Naive thymus-derived CD4-positive, alpha-beta T cell (primary cell): ENCODE measurements at regions of chr5 and their contacts with region 1.

Region 1: DNA sequence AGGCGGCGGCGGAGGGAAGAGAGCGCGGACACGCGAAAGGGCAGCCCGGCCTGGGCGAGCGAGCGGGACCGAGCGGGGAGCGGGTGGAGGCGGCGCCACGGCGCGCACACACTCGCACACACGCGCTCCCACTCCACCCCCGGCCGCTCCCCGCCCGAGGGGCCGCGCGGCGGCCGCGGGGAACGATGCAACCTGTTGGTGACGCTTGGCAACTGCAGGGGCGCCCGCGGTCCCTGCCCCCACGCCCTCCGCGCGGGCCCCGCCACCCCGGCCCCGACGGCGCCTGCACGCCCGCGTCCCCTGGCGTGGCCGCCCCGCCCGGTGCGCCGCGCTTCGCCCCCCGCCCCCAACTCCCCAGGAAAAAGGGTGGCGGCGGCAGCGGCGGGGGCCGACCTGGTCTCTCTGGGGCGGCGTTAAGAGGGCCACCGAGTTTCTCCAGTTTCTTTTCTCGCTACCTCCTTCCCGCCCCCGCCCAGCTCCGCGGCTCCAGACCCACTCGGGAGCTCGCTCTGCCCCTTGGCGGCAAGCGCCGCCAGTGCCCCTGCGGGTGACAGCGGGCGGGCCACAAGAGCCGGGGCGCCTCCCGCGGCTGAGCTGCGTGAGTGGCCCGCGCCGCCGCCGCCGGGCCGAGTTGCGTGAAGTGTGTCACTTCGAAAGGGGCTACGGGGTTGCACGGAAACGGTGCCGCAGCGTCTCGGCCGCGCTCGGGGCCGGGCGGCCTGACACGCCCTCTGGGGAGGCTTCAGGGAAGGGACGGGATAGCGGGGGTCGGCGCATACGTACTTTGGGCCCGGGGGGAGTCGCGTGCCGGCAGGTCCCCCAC is at the start of gene NR3C1:
- DNase-seq: peak; percentile 83 to 92 (median 90)
- ATAC-seq: peak; percentile 85
- H3K4me3 ChIP-seq: peak within 1 kb of the TSS; percentile 98
- H3K4me3 Mint-ChIP-seq: peak within 1 kb of the TSS; percentile 93 to 99 (median 96)
- H3K27ac ChIP-seq: peak within 1 kb of the TSS; percentile 91
- H3K27ac Mint-ChIP-seq: peak within 1 kb of the TSS; percentile 98 to 100 (median 99)
- H3K4me1 ChIP-seq: peaks cover 17 to 29% of the 10 kb centered on the region in 2 donors
- H3K4me1 Mint-ChIP-seq: peaks cover 30 to 48% (median 40%) of the 10 kb centered on the region in 7 donors
- H3K27me3 ChIP-seq: no peaks in the 10 kb centered on the region
- H3K27me3 Mint-ChIP-seq: peaks cover 0 to 2% (median 0%) of the 10 kb centered on the region in 5 donors
- total RNA-seq, gene NR3C1: 68.0 to 140 (median 121) TPM

Region 2: GRCh38 chr5:142922223-142922952 is 481.4 kb before region 1 on chr5:
- CTCF ChIA-PET with region 1: interaction called, 3 read pairs
- POLR2A ChIA-PET with region 1: no interaction called
- intact Hi-C with region 1: loop called (anchors 1 to 2 kb)
- DNase-seq: peak in 1 of 9 donors; percentile 3
- ATAC-seq: peak; percentile 50
- H3K4me3 ChIP-seq: no peak overlapping the region
- H3K4me3 Mint-ChIP-seq: no peak overlapping the region
- H3K27ac ChIP-seq: no peak overlapping the region
- H3K27ac Mint-ChIP-seq: peak overlapping the region in 2 of 9 donors; percentile 9 to 19
- H3K4me1 ChIP-seq: peaks cover 0 to 19% of the 10 kb centered on the region in 2 donors
- H3K4me1 Mint-ChIP-seq: peaks cover 7 to 40% (median 11%) of the 10 kb centered on the region in 7 donors
- H3K27me3 ChIP-seq: no peaks in the 10 kb centered on the region
- H3K27me3 Mint-ChIP-seq: no peaks in the 10 kb centered on the region

Region 3: GRCh38 chr5:143101121-143101520 is 302.7 kb before region 1 on chr5:
- CTCF ChIA-PET with region 1: no interaction called
- POLR2A ChIA-PET with region 1: no interaction called
- intact Hi-C with region 1: loop called in 1 of 2 experiments (anchors 5 kb)
- DNase-seq: no peak
- ATAC-seq: no peak
- H3K4me3 ChIP-seq: no peak overlapping the region
- H3K4me3 Mint-ChIP-seq: peak overlapping the region in 1 of 10 donors; percentile 77
- H3K27ac ChIP-seq: no peak overlapping the region
- H3K27ac Mint-ChIP-seq: peak overlapping the region in 3 of 9 donors; percentile 3 to 91 (median 65)
- H3K4me1 ChIP-seq: peaks cover 0 to 6% of the 10 kb centered on the region in 2 donors
- H3K4me1 Mint-ChIP-seq: peaks cover 0 to 34% (median 9%) of the 10 kb centered on the region in 7 donors
- H3K27me3 ChIP-seq: no peaks in the 10 kb centered on the region
- H3K27me3 Mint-ChIP-seq: no peaks in the 10 kb centered on the region

Region 4: GRCh38 chr5:143119291-143119769 is 284.5 kb before region 1 on chr5:
- CTCF ChIA-PET with region 1: no interaction called
- POLR2A ChIA-PET with region 1: no interaction called
- intact Hi-C with region 1: no loop called
- DNase-seq: no peak
- ATAC-seq: peak; percentile 49
- H3K4me3 ChIP-seq: no peak overlapping the region
- H3K4me3 Mint-ChIP-seq: no peak overlapping the region
- H3K27ac ChIP-seq: no peak overlapping the region
- H3K27ac Mint-ChIP-seq: no peak overlapping the region
- H3K4me1 ChIP-seq: peaks cover 0 to 7% of the 10 kb centered on the region in 2 donors
- H3K4me1 Mint-ChIP-seq: peaks cover 0 to 22% (median 0%) of the 10 kb centered on the region in 7 donors
- H3K27me3 ChIP-seq: no peaks in the 10 kb centered on the region
- H3K27me3 Mint-ChIP-seq: no peaks in the 10 kb centered on the region

Region 5: GRCh38 chr5:143355720-143356119 is 48.1 kb before region 1 on chr5:
- CTCF ChIA-PET with region 1: interaction called, 4 read pairs
- POLR2A ChIA-PET with region 1: interaction called, 21 read pairs
- intact Hi-C with region 1: loop called (anchors 1 kb)
- DNase-seq: peak in 7 of 9 donors; percentile 43 to 82 (median 63)
- ATAC-seq: peak; percentile 85
- H3K4me3 ChIP-seq: no peak overlapping the region
- H3K4me3 Mint-ChIP-seq: peak overlapping the region in 8 of 10 donors; percentile 9 to 51 (median 39)
- H3K27ac ChIP-seq: no peak overlapping the region
- H3K27ac Mint-ChIP-seq: peak overlapping the region in 8 of 9 donors; percentile 33 to 92 (median 79)
- H3K4me1 ChIP-seq: peaks cover 53 to 60% of the 10 kb centered on the region in 2 donors
- H3K4me1 Mint-ChIP-seq: peaks cover 7 to 84% (median 56%) of the 10 kb centered on the region in 7 donors
- H3K27me3 ChIP-seq: no peaks in the 10 kb centered on the region
- H3K27me3 Mint-ChIP-seq: no peaks in the 10 kb centered on the region

Region 6: DNA sequence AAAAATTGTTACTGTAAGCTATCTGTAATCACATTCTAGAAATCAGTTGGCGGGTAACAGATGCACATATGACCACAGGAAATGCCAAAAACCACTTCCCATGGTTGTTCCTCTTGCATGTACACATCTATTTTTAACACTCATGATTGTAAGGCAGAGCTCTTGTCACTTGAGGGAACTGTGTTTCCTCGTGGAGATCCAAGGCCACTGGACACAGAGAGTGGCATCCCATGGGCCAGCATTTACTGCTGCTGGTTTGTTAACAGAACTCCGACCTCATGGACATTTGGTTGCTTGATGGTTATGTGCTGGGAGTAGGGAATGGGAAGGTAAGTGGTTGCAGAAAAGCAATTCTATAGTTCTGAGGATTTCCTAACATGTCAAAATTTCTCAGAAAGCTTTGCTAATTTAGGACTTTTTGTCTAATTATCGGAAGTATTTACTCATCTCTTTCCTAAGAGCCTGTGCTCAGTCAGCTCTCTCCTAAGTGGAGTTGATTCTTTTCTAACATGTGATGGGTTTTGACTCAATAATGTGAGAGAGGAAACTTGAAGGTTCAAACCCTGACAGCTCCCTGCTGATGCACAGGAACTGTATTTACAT is 201.7 kb after region 1 on chr5:
- CTCF ChIA-PET with region 1: no interaction called
- POLR2A ChIA-PET with region 1: no interaction called
- intact Hi-C with region 1: loop called in 1 of 2 experiments (anchors 1 kb)
- DNase-seq: peak in 3 of 9 donors; percentile 12 to 16 (median 13)
- ATAC-seq: peak; percentile 69
- H3K4me3 ChIP-seq: no peak overlapping the region
- H3K4me3 Mint-ChIP-seq: peak overlapping the region in 2 of 10 donors; percentile 57 to 84
- H3K27ac ChIP-seq: no peak overlapping the region
- H3K27ac Mint-ChIP-seq: peak overlapping the region in 2 of 9 donors; percentile 51 to 93
- H3K4me1 ChIP-seq: peaks cover 6 to 22% of the 10 kb centered on the region in 2 donors
- H3K4me1 Mint-ChIP-seq: peaks cover 24 to 36% (median 27%) of the 10 kb centered on the region in 7 donors
- H3K27me3 ChIP-seq: no peaks in the 10 kb centered on the region
- H3K27me3 Mint-ChIP-seq: peaks cover 6 to 25% (median 18%) of the 10 kb centered on the region in 5 donors